ENCODE measurements at regions of chr1 and their contacts with region 1.

Region 1: DNA sequence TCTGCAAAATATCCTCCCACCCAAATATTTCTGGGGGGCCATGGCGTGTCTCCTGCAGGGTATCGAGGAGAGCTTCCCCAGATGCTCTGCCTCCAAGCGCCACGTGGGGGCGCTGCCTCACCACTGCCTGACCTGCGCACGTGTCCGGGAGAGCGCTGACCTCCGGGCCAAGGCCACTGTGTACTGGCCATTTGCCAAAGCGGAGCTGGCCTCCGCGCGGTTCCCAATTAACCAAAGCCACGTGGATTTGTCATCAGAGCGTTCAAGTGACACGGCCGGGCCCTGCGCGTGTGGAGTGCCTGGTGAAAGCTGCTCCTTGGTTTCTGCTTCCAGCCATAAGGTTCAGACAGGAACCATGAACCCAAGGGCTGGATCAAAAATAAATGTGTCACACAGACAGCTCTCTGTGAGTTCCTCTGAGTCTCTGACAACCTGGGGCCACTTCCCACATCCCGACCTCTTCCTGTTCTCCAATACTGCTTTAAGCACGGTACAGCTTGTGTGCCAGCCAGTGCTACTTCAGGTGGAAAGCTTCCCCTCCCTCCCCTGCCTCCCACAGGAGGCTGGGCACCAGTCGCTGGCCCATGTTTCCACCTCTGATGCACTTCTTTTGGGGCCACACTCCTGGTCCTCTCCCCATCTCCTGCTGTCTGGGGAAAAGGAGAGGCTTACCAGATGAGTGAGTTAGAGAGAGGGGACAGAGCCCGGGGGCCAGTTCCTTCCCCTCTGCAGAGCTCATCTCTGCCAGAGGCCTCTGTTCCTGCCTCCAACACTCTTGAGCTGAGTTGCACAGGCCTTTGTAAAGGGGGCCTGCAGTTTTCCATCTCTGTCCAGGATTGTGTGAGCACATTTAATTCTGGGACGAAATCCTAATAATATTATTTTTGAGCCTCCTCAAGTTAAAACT is 26.1 kb downstream of the ZP4 start:
- DNase-seq: peak; percentile 47 to 83 (median 80)
- ATAC-seq: peak; percentile 79 to 83
- H3K4me3 ChIP-seq: no peak overlapping the region
- H3K27ac ChIP-seq: no peak overlapping the region
- H3K4me1 ChIP-seq: no peaks in the 10 kb centered on the region
- H3K27me3 ChIP-seq: no peaks in the 10 kb centered on the region

Region 2: DNA sequence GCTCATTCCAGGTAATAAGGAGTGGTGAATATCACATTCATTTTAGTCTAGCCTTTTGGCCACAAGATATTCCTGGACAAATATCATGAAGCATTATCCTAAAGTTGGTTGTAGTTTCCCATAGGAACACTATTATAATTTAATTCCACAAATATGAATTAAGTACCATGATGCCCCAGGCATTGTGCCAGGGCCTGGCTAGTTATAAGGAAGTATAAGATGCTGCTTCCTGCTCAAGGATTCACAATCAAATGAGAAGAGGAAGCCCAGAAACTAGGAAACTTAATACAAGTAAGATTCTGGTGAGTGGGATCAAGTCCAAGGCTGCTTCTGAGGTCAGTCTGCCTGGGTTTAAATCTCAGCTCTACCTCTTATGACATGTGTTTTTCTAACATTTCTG is 56.7 kb after region 1 on chr1:
- intact Hi-C with region 1: loop called in 1 of 4 experiments (anchors 10 kb)
- DNase-seq: peak in 1 of 3 donors; percentile 59
- ATAC-seq: no peak
- H3K4me3 ChIP-seq: no peak overlapping the region
- H3K27ac ChIP-seq: no peak overlapping the region
- H3K4me1 ChIP-seq: no peaks in the 10 kb centered on the region
- H3K27me3 ChIP-seq: no peaks in the 10 kb centered on the region

Region 3: GRCh38 chr1:238944028-238944427 is 1079.4 kb after region 1 on chr1:
- intact Hi-C with region 1: no loop called
- DNase-seq: no peak
- ATAC-seq: no peak
- H3K4me3 ChIP-seq: no peak overlapping the region
- H3K27ac ChIP-seq: no peak overlapping the region
- H3K4me1 ChIP-seq: no peaks in the 10 kb centered on the region
- H3K27me3 ChIP-seq: no peaks in the 10 kb centered on the region